Heart left ventricle (tissue), 16 donors: ENCODE measurements at regions of chr14 and their contacts with region 1.

Region 1: GRCh38 chr14:50860478-50861086 is 11.3 kb upstream of the ABHD12B start:
- DNase-seq: peak; percentile 64 to 78 (median 77)
- ATAC-seq: peak; percentile 57 to 82 (median 70)
- H3K4me3 ChIP-seq: peak overlapping the region; percentile 12 to 73 (median 56)
- H3K27ac ChIP-seq: peak overlapping the region in 9 of 12 donors; percentile 8 to 86 (median 63)
- H3K4me1 ChIP-seq: peaks cover 0 to 14% (median 6%) of the 10 kb centered on the region in 12 donors
- H3K27me3 ChIP-seq: no peaks in the 10 kb centered on the region
- CTCF ChIP-seq: peak; percentile 66 to 86 (median 79)
- POLR2A ChIP-seq: no peak

Region 2: GRCh38 chr14:50619556-50620141 is 240.9 kb before region 1 on chr14:
- intact Hi-C with region 1: loop called in 1 of 10 experiments (anchors 10 kb)
- DNase-seq: no peak
- ATAC-seq: peak in 3 of 4 donors; percentile 32 to 53 (median 41)
- H3K4me3 ChIP-seq: no peak overlapping the region
- H3K27ac ChIP-seq: no peak overlapping the region
- H3K4me1 ChIP-seq: no peaks in the 10 kb centered on the region
- H3K27me3 ChIP-seq: no peaks in the 10 kb centered on the region
- CTCF ChIP-seq: peak; percentile 46 to 70 (median 58)
- POLR2A ChIP-seq: no peak

Region 3: DNA sequence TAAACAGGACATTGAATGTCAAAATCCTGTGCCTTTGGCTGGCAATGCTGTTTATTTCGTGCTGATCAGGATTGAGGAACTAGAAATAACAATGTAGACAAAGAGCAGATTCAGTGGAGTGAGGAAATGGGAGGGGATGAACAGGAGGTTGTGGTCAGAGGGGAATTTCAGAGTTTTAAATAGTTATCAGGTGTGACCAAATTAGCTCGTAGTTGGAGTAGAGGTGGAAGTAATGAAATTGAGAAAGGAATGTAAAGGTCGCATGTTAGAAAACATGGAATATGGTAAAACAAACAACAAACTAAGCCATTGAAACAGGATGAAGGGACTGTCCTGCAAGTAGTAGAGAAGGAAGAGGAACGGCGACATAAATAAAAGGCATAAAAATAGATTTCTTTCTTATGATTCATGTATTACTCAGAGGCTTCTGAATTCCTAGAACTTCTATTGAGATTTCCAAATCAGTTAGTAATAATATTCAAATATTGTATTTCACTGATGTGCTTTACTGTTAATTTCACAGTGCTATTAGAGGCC is 183.0 kb before region 1 on chr14:
- intact Hi-C with region 1: no loop called
- DNase-seq: no peak
- ATAC-seq: peak in 3 of 4 donors; percentile 34 to 80 (median 49)
- H3K4me3 ChIP-seq: peak overlapping the region in 3 of 12 donors; percentile 7 to 20 (median 10)
- H3K27ac ChIP-seq: peak overlapping the region in 9 of 12 donors; percentile 1 to 69 (median 11)
- H3K4me1 ChIP-seq: peaks cover 0 to 27% (median 10%) of the 10 kb centered on the region in 12 donors
- H3K27me3 ChIP-seq: no peaks in the 10 kb centered on the region
- CTCF ChIP-seq: no peak
- POLR2A ChIP-seq: no peak

Region 4: DNA sequence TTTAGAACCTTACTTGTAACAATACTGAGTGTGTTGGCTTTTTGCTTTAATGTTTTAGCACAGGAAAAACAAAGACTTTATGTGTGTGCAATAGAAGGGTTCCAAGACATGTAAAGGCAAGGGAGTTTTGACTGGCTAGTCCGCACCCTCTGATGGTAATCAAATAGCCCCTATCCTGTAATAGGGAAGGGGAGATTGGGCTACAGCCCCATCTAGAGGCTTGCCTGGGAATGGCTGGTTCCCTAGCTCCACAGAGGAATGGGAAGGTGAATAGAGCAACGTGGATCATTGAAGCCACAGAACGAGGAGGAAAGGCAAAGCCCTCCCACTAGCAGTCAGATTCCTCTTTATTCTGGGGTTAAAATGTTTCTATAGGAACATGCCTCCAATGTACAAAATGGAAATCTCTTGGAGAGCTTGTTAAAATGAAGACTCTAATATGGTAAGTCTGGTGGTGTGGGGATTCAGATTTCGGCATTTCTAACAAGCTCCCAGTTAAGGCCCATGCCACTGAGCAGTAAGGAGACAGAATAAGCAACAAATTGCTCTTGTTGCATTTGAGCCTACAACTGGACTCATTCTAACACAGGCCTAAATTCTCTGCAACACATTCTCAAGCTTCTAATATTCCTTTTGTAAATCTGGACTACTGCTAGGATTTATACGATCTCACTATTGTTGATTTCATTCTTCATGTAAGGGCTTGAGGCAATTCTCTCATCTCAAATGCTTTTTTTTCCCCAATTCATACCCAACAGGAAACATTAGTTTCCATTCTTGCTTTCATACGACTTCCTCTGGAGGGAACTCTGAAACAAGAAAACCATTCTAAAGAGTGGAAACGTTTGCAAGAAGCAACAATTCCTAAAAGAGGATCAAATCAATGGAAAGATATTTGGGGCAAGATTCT is 86.7 kb before region 1 on chr14:
- intact Hi-C with region 1: loop called in 7 of 10 experiments (anchors 2 to 10 kb)
- DNase-seq: peak in 1 of 5 donors; percentile 25
- ATAC-seq: peak in 3 of 4 donors; percentile 37 to 70 (median 55)
- H3K4me3 ChIP-seq: no peak overlapping the region
- H3K27ac ChIP-seq: no peak overlapping the region
- H3K4me1 ChIP-seq: peaks cover 0 to 31% (median 18%) of the 10 kb centered on the region in 12 donors
- H3K27me3 ChIP-seq: no peaks in the 10 kb centered on the region
- CTCF ChIP-seq: peak; percentile 45 to 74 (median 64)
- POLR2A ChIP-seq: no peak

Region 5: GRCh38 chr14:50778721-50779483 is 81.7 kb before region 1 on chr14:
- intact Hi-C with region 1: loop called in 9 of 10 experiments (anchors 2 to 10 kb)
- DNase-seq: no peak
- ATAC-seq: no peak
- H3K4me3 ChIP-seq: no peak overlapping the region
- H3K27ac ChIP-seq: peak overlapping the region in 1 of 12 donors; percentile 12
- H3K4me1 ChIP-seq: peaks cover 0 to 47% (median 19%) of the 10 kb centered on the region in 12 donors
- H3K27me3 ChIP-seq: no peaks in the 10 kb centered on the region
- CTCF ChIP-seq: no peak
- POLR2A ChIP-seq: no peak

Region 6: DNA sequence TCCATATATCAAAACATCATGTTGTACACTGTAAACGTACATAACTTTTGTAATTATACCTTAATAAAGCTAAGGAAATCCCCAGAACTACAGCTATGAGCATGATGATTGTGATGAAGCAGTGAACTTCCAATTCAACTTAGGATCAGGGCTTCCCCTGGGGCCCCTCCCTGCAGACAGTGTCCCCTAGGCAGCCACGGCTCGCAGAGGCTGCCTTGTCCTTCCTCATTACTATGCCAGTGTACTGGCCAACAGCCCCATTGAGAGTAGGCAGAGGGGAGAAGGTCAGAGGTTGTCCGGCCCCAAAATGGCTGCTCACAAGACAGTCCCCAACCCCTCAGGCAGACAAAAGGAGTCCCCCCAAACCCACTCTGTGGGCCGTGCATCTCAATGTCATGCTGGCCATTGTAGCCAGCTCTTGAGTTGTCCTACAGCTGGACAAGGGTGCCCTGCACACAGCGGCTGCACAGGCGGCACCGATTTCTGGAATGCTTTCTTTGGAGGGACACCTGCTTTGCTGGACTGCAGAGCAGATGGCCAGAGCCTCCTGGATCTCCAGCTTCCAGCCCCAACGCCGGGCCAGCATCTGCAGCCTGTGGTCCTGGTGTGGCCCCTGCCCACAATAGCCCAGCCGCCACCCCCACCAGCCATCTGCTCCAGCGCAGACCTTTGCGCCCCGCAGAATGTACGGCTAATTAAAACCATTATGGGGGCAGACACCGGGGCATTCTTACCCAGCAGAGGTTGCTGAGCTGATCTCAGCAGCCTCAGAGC is 75.7 kb before region 1 on chr14:
- intact Hi-C with region 1: loop called in 3 of 10 experiments (anchors 5 kb)
- DNase-seq: peak in 1 of 5 donors; percentile 33
- ATAC-seq: peak; percentile 39 to 51 (median 42)
- H3K4me3 ChIP-seq: peak overlapping the region in 1 of 12 donors; percentile 5
- H3K27ac ChIP-seq: peak overlapping the region in 3 of 12 donors; percentile 26 to 64 (median 53)
- H3K4me1 ChIP-seq: peaks cover 8 to 63% (median 33%) of the 10 kb centered on the region in 12 donors
- H3K27me3 ChIP-seq: no peaks in the 10 kb centered on the region
- CTCF ChIP-seq: no peak
- POLR2A ChIP-seq: no peak

Region 7: DNA sequence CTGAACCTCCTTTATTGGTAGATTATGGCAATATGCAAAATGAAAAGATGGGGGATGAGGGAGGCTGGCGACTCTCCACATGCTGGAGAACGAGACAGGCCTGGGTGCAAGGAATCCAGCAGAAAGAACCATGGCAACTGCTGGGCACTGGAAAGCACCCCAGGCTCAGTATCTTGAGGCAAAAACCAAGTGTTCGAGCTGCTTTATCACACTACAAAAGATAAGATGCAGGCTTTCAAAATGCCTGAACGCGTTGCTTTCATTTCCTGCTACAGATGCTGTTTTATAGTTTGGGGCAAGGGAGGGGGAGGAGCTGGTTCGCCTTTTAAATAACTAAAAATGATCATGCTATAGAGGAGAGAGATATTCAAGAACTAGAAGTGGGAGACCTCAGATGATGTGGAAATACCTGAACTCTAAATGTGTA is 68.5 kb before region 1 on chr14:
- intact Hi-C with region 1: loop called in 1 of 10 experiments (anchors 5 kb)
- DNase-seq: no peak
- ATAC-seq: no peak
- H3K4me3 ChIP-seq: peak overlapping the region; percentile 1 to 55 (median 40)
- H3K27ac ChIP-seq: peak overlapping the region in 11 of 12 donors; percentile 45 to 85 (median 74)
- H3K4me1 ChIP-seq: peaks cover 0 to 44% (median 8%) of the 10 kb centered on the region in 12 donors
- H3K27me3 ChIP-seq: no peaks in the 10 kb centered on the region
- CTCF ChIP-seq: no peak
- POLR2A ChIP-seq: no peak

Region 8: GRCh38 chr14:50937325-50937724 is 76.7 kb after region 1 on chr14:
- intact Hi-C with region 1: no loop called
- DNase-seq: no peak
- ATAC-seq: no peak
- H3K4me3 ChIP-seq: no peak overlapping the region
- H3K27ac ChIP-seq: peak overlapping the region in 1 of 12 donors; percentile 68
- H3K4me1 ChIP-seq: peaks cover 0 to 37% (median 0%) of the 10 kb centered on the region in 12 donors
- H3K27me3 ChIP-seq: no peaks in the 10 kb centered on the region
- CTCF ChIP-seq: no peak
- POLR2A ChIP-seq: no peak